ENCODE measurements at regions of chr5 and their contacts with region 1.

Region 1: DNA sequence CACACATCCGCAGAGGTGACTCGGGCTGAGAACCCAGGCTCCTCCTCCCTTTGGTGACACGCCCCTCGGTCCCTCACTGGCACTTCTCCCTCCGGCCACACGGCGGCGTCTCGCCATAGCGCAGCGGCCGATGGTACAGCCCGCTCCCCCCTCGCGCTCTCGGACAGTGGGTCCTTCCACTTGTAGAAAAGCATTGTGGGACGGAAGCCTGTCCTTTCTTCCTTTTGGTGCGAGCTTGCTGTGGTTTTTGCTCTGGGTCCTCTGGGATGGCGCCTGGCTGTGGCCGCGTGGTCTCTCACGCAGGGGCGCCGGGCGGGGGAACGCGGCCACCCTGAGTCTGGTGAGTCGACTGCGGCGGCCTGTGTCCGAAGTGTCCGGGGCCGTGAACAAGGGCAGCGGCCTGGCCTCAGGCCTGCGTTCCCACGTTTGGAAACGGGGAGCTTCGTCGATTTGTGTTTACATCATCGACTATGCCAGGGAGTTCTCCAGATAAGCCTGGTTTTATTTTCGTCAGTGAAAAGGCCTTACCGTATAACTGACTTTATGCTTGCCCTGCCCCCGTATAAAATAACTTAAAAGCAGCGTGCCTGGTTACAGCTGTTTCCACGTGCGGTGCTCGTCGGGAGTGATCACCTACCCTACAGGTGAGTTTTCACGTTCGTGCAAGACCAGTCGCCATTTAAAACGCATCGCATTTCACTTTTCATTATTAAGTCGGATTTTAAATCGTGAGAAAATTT is 258.3 kb downstream of the EPB41L4A start:
- DNase-seq: peak; percentile 80 to 86
- ATAC-seq: peak; percentile 93 to 96
- H3K4me3 ChIP-seq: peak overlapping the region; percentile 91 to 96 (median 96)
- H3K27ac ChIP-seq: peak overlapping the region; percentile 89 to 93 (median 90)
- H3K4me1 ChIP-seq: peaks cover 14 to 23% of the 10 kb centered on the region in 2 donors
- H3K27me3 ChIP-seq: no peaks in the 10 kb centered on the region
- CTCF ChIP-seq: peak; percentile 91 to 98 (median 94)
- POLR2A ChIP-seq: peak; percentile 84 to 88

Region 2: DNA sequence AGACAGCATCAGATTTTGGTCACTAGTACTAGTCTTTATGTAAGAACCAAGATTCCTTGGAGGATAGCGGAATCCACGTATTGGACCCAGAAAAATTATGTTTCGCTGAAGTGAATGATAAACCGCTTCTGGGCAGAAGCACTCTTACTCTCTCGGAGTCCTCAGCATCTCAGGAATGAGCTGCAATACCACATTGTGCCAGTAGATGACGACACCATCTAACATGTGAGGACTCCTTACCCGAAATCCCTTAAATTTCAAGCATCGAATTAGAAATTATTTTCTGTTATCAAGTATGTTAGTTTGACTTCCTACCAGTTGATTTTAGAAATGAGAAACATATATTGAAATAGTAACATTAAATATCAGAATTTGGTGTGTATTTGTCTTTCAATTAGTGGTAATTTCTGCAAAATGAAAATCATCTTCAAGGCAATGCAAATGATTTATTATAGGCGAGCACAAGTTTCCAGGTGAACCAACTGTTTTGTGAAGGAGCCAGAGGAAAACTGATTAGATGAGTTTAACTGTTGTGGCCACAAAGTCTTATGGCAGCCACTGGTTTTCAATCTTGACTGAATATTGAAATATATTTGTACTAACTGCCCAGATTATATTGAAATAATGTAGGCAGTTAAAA is 1002.6 kb before region 1 on chr5:
- in situ Hi-C with region 1: loop called in 1 of 4 experiments (anchors 25 kb)
- intact Hi-C with region 1: no loop called
- DNase-seq: peak; percentile 5 to 16
- ATAC-seq: no peak
- H3K4me3 ChIP-seq: no peak overlapping the region
- H3K27ac ChIP-seq: no peak overlapping the region
- H3K4me1 ChIP-seq: no peaks in the 10 kb centered on the region
- H3K27me3 ChIP-seq: no peaks in the 10 kb centered on the region
- CTCF ChIP-seq: peak; percentile 72 to 93 (median 78)
- POLR2A ChIP-seq: no peak

Region 3: GRCh38 chr5:112253478-112254250 is 92.8 kb after region 1 on chr5:
- in situ Hi-C with region 1: no loop called
- intact Hi-C with region 1: loop called (anchors 5 kb)
- DNase-seq: peak; percentile 85 to 88
- ATAC-seq: peak; percentile 100
- H3K4me3 ChIP-seq: no peak overlapping the region
- H3K27ac ChIP-seq: peak overlapping the region; percentile 63 to 79 (median 70)
- H3K4me1 ChIP-seq: peaks cover 10 to 38% of the 10 kb centered on the region in 2 donors
- H3K27me3 ChIP-seq: no peaks in the 10 kb centered on the region
- CTCF ChIP-seq: no peak
- POLR2A ChIP-seq: no peak

Region 4: DNA sequence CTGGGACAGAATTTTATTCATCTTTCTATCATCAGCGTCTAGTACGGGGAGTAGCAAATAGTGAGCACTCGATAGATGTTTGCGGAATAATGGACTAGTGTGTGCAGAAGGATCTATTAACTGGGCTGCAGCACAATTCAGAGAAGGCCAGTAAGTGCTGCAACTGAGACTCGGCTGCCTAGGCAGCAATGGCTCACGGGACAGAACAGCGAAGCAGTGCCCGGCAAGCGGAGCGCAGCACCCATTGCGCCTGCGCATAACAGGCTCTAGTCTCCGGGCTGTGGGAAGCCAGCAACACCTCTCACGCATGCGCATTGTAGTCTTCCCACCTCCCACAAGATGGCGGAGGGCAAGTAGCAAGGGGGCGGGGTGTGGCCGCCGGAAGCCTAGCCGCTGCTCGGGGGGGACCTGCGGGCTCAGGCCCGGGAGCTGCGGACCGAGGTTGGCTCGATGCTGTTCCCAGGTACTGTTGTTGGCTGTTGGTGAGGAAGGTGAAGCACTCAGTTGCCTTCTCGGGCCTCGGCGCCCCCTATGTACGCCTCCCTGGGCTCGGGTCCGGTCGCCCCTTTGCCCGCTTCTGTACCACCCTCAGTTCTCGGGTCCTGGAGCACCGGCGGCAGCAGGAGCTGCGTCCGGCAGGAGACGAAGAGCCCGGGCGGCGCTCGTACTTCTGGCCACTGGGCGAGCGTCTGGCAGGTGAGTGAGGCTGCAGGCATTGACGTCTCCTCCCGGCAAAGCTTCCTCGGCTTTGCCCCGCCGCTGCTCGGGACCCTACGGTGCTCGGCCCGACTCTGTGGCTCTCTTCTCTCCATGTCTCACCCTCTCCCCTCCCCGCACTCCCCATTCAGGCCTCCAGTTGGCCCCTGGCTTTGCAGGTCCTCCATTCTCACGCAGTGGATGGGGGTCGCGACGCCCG is 546.6 kb after region 1 on chr5:
- in situ Hi-C with region 1: no loop called
- intact Hi-C with region 1: loop called (anchors 5 kb)
- DNase-seq: peak; percentile 98 to 99
- ATAC-seq: peak; percentile 97 to 99
- H3K4me3 ChIP-seq: peak overlapping the region; percentile 80 to 99 (median 89)
- H3K27ac ChIP-seq: peak overlapping the region; percentile 91 to 97 (median 94)
- H3K4me1 ChIP-seq: peaks cover 40 to 41% of the 10 kb centered on the region in 2 donors
- H3K27me3 ChIP-seq: no peaks in the 10 kb centered on the region
- CTCF ChIP-seq: peak in 3 of 5 experiments; percentile 11 to 18 (median 13)
- POLR2A ChIP-seq: peak; percentile 54 to 64

Region 5: GRCh38 chr5:112757468-112758208 is 596.8 kb after region 1 on chr5:
- in situ Hi-C with region 1: loop called in 1 of 4 experiments (anchors 25 kb)
- intact Hi-C with region 1: no loop called
- DNase-seq: no peak
- ATAC-seq: peak; percentile 80 to 90
- H3K4me3 ChIP-seq: peak overlapping the region in 2 of 4 donors; percentile 8 to 22
- H3K27ac ChIP-seq: peak overlapping the region in 3 of 4 donors; percentile 16 to 39 (median 34)
- H3K4me1 ChIP-seq: peaks cover 0 to 5% of the 10 kb centered on the region in 2 donors
- H3K27me3 ChIP-seq: no peaks in the 10 kb centered on the region
- CTCF ChIP-seq: peak; percentile 64 to 92 (median 80)
- POLR2A ChIP-seq: no peak